Calu3 (cell line): ENCODE measurements at regions of chr1 and their contacts with region 1.

Region 1: DNA sequence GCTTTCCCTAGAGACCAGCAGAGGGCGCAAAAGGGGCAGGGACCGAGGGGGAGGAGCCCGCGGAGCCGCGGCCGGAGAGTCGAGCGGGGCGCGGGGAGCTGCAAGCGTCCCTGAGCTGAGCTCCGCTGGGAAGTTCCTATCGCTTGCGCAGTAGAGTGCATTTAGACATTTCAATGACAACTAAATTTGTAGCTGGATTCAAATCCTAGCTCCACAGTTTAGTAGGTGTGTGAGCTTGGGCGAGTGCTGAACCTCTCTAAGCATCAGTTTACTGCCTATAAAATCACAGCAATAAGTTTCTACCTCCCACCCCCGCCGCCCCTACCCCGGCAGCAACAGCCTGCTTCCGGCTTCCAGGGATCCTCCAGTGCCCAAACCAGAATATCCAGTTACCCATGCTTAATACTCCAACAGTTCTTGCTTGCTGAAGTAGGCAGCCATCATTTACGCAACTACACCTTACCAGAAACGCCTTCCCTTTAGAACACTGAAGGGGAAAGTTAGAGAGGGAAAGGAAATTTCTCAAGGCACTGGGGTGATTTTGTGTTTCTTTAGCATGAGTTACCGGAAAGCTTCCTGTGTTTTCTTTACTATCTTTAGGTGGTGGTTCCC is 9.1 kb downstream of the TLR5 start:
- DNase-seq: peak; percentile 92
- H3K4me3 Mint-ChIP-seq: peak overlapping the region; percentile 62
- H3K27ac Mint-ChIP-seq: peak overlapping the region; percentile 72
- H3K4me1 Mint-ChIP-seq: peaks cover 53% of the 10 kb centered on the region
- H3K27me3 Mint-ChIP-seq: no peaks in the 10 kb centered on the region
- CTCF ChIP-seq: peak; percentile 96

Region 2: DNA sequence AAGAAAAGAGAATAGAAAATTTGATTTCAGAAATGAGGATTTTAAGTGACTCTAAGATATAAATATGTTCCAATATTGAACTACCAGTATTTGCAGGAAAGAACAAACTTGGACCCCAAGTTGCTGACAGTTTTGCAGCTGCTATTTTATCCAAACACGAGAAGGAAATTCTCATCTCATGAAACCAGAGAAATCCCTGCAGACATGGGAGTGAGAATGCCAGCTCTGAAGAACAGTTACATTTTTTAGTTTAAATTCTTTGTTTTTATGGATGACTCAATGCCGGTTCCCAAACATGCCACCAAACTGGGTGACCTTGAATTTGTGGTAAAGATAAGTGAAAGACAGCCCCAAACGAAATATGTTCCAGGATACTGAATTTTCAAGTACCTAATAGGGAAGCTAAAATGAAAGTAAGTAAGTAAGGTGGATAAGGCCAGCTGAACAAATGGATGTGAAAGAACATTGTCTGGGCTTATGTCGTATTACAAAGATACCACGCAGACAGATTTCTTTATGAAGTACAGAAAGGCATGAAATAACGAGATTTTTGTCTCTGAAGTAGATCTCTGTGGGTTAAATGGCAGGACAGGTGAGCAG is 10.8 kb before region 1 on chr1:
- CTCF ChIA-PET with region 1: interaction called, 32 read pairs
- intact Hi-C with region 1: no loop called
- DNase-seq: no peak
- H3K4me3 Mint-ChIP-seq: peak overlapping the region; percentile 29
- H3K27ac Mint-ChIP-seq: no peak overlapping the region
- H3K4me1 Mint-ChIP-seq: peaks cover 10% of the 10 kb centered on the region
- H3K27me3 Mint-ChIP-seq: no peaks in the 10 kb centered on the region
- CTCF ChIP-seq: no peak

Region 3: GRCh38 chr1:223180731-223181321 is 46.9 kb after region 1 on chr1:
- CTCF ChIA-PET with region 1: interaction called, 17 read pairs
- intact Hi-C with region 1: no loop called
- DNase-seq: peak; percentile 57
- H3K4me3 Mint-ChIP-seq: peak overlapping the region; percentile 25
- H3K27ac Mint-ChIP-seq: peak overlapping the region; percentile 91
- H3K4me1 Mint-ChIP-seq: peaks cover 57% of the 10 kb centered on the region
- H3K27me3 Mint-ChIP-seq: no peaks in the 10 kb centered on the region
- CTCF ChIP-seq: no peak

Region 4: GRCh38 chr1:223358826-223359225 is 224.9 kb after region 1 on chr1:
- CTCF ChIA-PET with region 1: interaction called, 10 read pairs
- intact Hi-C with region 1: loop called (anchors 10 kb)
- DNase-seq: peak; percentile 22
- H3K4me3 Mint-ChIP-seq: no peak overlapping the region
- H3K27ac Mint-ChIP-seq: no peak overlapping the region
- H3K4me1 Mint-ChIP-seq: peaks cover 14% of the 10 kb centered on the region
- H3K27me3 Mint-ChIP-seq: peaks cover 83% of the 10 kb centered on the region
- CTCF ChIP-seq: no peak

Region 5: DNA sequence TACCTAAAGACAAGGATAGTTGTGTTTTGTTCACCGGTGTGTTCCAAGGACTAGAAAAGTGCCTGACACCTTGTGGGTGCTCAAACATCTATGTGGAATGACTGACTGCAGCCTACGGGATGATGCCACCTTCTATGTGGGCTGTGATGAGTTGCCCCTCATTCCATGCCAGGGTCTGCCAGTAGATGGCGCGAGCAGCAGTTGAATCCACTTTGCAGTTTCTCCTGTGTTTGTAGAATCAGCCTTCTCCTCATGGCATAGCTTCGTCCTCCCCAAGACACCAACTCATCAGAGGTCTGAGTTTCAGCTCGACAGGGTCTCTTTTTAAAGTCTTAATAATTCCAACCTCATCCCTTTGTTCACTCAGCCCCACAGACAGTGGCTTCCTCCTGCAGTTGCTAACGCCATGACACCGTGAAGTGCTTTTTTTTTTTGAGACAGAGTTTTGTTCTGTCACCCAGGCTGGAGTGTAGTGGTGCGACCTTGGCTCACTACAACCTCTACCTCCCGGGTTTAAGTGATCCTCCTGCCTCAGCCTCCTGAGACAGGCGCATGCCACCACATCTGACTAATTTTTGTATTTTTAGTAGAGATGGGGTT is 397.9 kb after region 1 on chr1:
- CTCF ChIA-PET with region 1: interaction called, 7 read pairs
- intact Hi-C with region 1: loop called (anchors 2 kb)
- DNase-seq: peak; percentile 85
- H3K4me3 Mint-ChIP-seq: no peak overlapping the region
- H3K27ac Mint-ChIP-seq: no peak overlapping the region
- H3K4me1 Mint-ChIP-seq: no peaks in the 10 kb centered on the region
- H3K27me3 Mint-ChIP-seq: peaks cover 58% of the 10 kb centered on the region
- CTCF ChIP-seq: peak; percentile 87